Activated CD8-positive, alpha-beta memory T cell treated with anti-CD3 and anti-CD28 coated beads, Interleukin-2, amount 10 ng/mL, durations not matched to agents 7 days and 5 days (primary cell): ENCODE measurements at regions of chr3 and their contacts with region 1.

Region 1: DNA sequence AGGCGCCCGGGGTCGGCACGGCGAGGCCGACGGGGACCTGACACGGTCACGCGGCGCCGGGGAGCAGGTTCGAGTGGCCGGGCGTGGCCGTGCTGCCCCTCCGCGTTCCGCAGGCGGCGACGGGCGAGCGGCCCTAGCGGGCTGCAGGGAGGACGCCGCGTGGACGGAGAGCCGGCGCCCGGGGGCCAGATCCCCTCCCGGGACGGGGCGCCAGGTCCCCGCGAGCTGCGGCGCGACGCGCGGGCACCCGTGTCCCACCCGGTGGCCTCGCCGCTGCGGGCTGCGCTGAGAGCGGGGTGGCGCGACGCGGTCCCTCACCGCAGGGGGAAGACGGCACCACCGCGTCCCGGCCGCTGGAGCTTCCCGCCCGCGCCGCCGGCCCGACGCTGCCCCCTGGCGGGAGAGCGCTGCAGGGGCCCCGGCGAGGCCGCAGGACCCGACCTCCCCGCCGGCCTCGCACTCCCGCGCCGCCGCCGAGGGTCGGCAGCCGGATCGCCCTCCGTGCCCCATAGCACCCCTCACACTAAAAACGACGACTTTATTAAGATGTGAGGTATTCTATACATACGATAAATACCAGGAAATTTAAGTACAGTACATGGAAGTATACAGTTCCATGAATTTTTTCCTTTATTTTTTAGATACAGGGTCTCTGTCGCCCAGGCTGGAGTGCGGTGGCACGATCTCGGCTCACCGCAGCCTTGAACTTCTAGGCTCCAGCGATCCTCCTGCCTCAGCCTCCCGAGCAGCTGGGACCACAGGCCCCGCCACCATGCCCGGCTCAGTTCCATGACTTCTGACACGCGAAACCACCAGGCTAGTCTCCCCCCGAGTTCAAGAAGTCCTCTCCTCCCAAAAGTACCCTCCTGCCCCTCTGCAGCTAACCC is 1.3 kb upstream of the PIGZ start:
- DNase-seq: peak; percentile 70
- ATAC-seq: peak; percentile 74
- H3K4me3 Mint-ChIP-seq: peak overlapping the region; percentile 52
- H3K27ac Mint-ChIP-seq: peak overlapping the region; percentile 42
- H3K4me1 Mint-ChIP-seq: peaks cover 17% of the 10 kb centered on the region
- H3K27me3 Mint-ChIP-seq: peaks cover 22% of the 10 kb centered on the region

Region 2: DNA sequence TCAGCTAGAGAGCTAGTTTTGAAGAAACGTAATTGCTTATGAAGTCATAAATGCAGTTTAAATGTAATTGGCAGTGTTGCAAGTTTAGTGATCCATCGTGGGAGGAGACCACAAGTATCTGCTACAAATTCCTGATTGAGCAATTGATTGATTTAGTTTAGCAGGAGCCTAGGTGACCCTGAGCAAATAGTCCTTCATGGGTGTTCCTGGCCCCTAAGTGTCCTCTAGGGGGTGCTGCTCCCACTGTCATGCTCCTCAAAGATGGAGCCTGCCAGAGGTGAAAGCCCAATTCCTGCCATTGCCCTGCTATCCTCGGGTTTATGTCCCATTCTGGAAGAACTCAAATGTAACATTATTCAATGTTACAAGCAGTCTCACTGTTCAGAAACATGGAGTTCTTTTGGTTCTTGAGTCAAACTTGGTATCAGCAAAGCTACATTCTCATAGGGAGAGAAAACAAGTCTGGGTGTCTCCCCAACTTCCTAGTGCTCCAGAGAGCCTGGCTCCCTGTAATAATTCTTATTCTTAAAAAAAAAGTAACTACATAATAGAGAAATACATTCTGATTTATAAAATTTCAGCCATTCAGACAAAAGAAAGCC is 132.0 kb before region 1 on chr3:
- CTCF ChIA-PET with region 1: interaction called, 53 read pairs
- DNase-seq: peak; percentile 82
- ATAC-seq: peak; percentile 91
- H3K4me3 Mint-ChIP-seq: no peak overlapping the region
- H3K27ac Mint-ChIP-seq: no peak overlapping the region
- H3K4me1 Mint-ChIP-seq: peaks cover 6% of the 10 kb centered on the region
- H3K27me3 Mint-ChIP-seq: no peaks in the 10 kb centered on the region

Region 3: GRCh38 chr3:197168606-197169005 is 198.7 kb after region 1 on chr3:
- CTCF ChIA-PET with region 1: no interaction called
- DNase-seq: no peak
- ATAC-seq: no peak
- H3K4me3 Mint-ChIP-seq: no peak overlapping the region
- H3K27ac Mint-ChIP-seq: no peak overlapping the region
- H3K4me1 Mint-ChIP-seq: peaks cover 2% of the 10 kb centered on the region
- H3K27me3 Mint-ChIP-seq: no peaks in the 10 kb centered on the region